MCF 10A (cell line): ENCODE measurements at regions of chr7 and their contacts with region 1.

Region 1: DNA sequence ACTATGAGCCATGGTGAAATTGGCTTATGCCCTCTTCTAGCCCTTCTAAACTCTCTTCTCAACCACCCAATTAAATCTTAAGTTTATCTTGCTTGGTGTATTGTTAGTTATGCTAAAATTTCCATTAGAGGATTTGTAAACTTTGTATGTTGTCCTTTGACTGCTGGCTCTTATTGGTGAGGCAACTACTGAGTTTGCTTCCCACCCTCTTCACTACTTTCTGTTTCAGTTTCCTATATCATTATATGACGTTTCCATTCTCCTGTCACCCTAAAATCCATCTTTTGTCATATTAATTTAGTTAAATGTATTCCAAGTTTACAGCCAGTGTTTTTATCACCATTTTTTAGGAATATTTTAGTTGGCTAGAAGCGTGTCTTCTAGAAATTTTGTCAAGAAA is 80.9 kb upstream of the VWC2 start:
- DNase-seq: no peak
- H3K4me3 Mint-ChIP-seq: no peak overlapping the region
- H3K27ac Mint-ChIP-seq: no peak overlapping the region
- H3K4me1 Mint-ChIP-seq: no peaks in the 10 kb centered on the region
- H3K27me3 Mint-ChIP-seq: peaks cover 59% of the 10 kb centered on the region
- CTCF ChIP-seq: no peak

Region 2: GRCh38 chr7:49112222-49112621 is 580.3 kb before region 1 on chr7:
- CTCF ChIA-PET with region 1: no interaction called
- POLR2A ChIA-PET with region 1: no interaction called
- intact Hi-C with region 1: loop called (anchors 5 kb)
- DNase-seq: no peak
- H3K4me3 Mint-ChIP-seq: no peak overlapping the region
- H3K27ac Mint-ChIP-seq: no peak overlapping the region
- H3K4me1 Mint-ChIP-seq: no peaks in the 10 kb centered on the region
- H3K27me3 Mint-ChIP-seq: peaks cover 29% of the 10 kb centered on the region
- CTCF ChIP-seq: no peak

Region 3: GRCh38 chr7:49855281-49855980 is 162.9 kb after region 1 on chr7:
- CTCF ChIA-PET with region 1: no interaction called
- POLR2A ChIA-PET with region 1: no interaction called
- intact Hi-C with region 1: no loop called
- DNase-seq: no peak
- H3K4me3 Mint-ChIP-seq: no peak overlapping the region
- H3K27ac Mint-ChIP-seq: no peak overlapping the region
- H3K4me1 Mint-ChIP-seq: no peaks in the 10 kb centered on the region
- H3K27me3 Mint-ChIP-seq: peaks cover 12% of the 10 kb centered on the region
- CTCF ChIP-seq: no peak

Region 4: GRCh38 chr7:50467817-50468610 is 775.5 kb after region 1 on chr7:
- CTCF ChIA-PET with region 1: no interaction called
- POLR2A ChIA-PET with region 1: no interaction called
- intact Hi-C with region 1: no loop called
- DNase-seq: peak; percentile 80
- H3K4me3 Mint-ChIP-seq: no peak overlapping the region
- H3K27ac Mint-ChIP-seq: no peak overlapping the region
- H3K4me1 Mint-ChIP-seq: peaks cover 7% of the 10 kb centered on the region
- H3K27me3 Mint-ChIP-seq: no peaks in the 10 kb centered on the region
- CTCF ChIP-seq: peak; percentile 91